Transverse colon (tissue), 4 donors: ENCODE measurements at regions of chr14 and their contacts with region 1.

Region 1: DNA sequence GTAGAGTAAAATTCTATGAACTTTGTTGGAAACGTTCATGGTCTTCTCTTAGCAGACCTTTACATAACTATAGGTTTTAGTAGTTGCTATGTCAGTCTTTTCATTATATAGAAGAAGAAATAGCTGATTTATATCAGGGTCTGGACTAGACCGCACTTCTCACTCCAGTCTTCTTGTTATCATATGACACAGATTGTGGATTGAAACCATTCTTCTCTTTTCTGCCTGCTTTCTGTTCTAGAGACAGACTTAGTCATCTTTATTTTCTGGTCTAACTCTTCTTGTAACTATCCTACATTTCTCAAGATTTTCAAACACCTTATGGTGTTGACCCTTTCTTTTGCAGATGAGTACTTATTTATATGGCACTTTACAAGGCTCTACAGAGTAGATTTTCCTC is 55.7 kb downstream of the PCNX1 start:
- DNase-seq: no peak
- H3K4me3 ChIP-seq: no peak overlapping the region
- H3K27ac ChIP-seq: no peak overlapping the region
- H3K4me1 ChIP-seq: no peaks in the 10 kb centered on the region
- H3K27me3 ChIP-seq: no peaks in the 10 kb centered on the region
- CTCF ChIP-seq: no peak
- EP300 ChIP-seq: no peak
- POLR2A ChIP-seq: no peak

Region 2: GRCh38 chr14:70821584-70822529 is 141.1 kb before region 1 on chr14:
- in situ Hi-C with region 1: loop called in 2 of 4 experiments (anchors 10 kb)
- intact Hi-C with region 1: no loop called
- DNase-seq: peak; percentile 58
- H3K4me3 ChIP-seq: peak overlapping the region; percentile 43 to 69 (median 50)
- H3K27ac ChIP-seq: no peak overlapping the region
- H3K4me1 ChIP-seq: peaks cover 0 to 20% (median 11%) of the 10 kb centered on the region in 4 donors
- H3K27me3 ChIP-seq: peaks cover 44% of the 10 kb centered on the region
- CTCF ChIP-seq: no peak
- EP300 ChIP-seq: no peak
- POLR2A ChIP-seq: no peak

Region 3: GRCh38 chr14:70887207-70887681 is 75.7 kb before region 1 on chr14:
- in situ Hi-C with region 1: no loop called
- intact Hi-C with region 1: no loop called
- DNase-seq: no peak
- H3K4me3 ChIP-seq: no peak overlapping the region
- H3K27ac ChIP-seq: peak overlapping the region; percentile 70 to 81 (median 76)
- H3K4me1 ChIP-seq: peaks cover 5 to 26% (median 9%) of the 10 kb centered on the region in 4 donors
- H3K27me3 ChIP-seq: no peaks in the 10 kb centered on the region
- CTCF ChIP-seq: no peak
- EP300 ChIP-seq: no peak
- POLR2A ChIP-seq: no peak